Activated CD4-positive, alpha-beta T cell treated with anti-CD3 and anti-CD28 coated beads for 36 hours (primary cell): ENCODE measurements at regions of chr18 and their contacts with region 1.

Region 1: DNA sequence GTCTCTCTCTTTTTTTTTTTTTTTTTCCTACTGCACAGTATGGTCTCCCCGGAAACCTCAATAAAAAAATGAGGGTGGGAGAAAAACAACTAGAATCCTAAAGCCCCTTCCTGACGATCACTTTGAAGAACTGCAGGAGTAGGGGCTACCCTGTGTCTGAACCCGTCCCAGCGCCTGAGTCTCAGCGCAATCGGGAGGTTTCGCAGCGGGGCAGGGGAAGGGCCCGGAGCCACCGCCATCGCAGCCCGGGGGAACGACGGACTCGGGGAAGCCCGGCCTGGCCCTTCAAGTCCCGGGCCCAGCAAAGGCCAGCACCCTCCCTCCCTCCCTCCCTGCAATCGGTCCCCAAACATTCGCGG is 411 bp downstream of the NARS1 start:
- DNase-seq: peak; percentile 54
- ATAC-seq: peak; percentile 24
- H3K4me3 Mint-ChIP-seq: peak overlapping the region; percentile 88
- H3K27ac Mint-ChIP-seq: peak overlapping the region; percentile 93
- H3K4me1 Mint-ChIP-seq: peaks cover 26% of the 10 kb centered on the region
- H3K27me3 Mint-ChIP-seq: no peaks in the 10 kb centered on the region

Region 2: DNA sequence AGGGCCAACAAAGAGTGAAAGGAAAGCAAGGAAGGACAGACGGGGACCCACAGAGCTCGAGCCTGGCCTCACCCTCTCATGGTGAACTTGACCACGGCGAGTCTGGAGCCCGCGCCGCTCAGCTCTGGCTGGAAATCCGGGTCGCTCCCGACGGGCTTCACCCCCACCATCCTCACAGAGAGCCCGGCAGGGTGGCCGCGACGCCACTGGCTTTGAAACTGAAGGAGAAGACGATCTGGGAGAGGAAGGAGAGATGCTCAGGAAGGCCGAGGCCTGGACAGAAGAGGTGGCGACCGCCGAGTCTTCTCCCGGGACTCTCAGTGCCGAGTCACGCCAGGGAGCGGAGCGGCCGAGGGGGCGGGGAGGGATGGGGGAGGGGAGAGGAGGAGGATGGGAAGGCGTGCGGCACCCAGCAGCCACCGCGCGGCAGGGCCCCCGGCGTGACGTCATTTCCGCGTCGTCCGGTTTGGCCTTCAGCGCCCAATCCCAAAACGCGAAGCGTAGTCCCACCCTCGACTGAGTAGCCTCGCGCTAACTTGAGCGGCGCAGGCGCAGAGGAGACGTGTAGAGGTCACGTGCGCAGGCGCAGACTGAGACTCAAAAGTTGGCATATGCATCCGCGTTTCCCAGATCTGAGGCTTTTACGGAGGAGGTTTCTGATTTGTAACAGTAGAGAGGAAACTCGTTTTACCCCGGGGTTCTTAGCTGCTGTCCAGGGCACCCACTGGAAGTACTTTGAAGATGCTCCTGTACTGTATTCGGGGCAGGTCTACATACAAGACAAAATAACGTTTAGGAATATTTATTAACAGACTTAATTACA is 982.7 kb before region 1 on chr18 and contains the start of gene TXNL1:
- CTCF ChIA-PET with region 1: interaction called, 3 read pairs
- POLR2A ChIA-PET with region 1: no interaction called
- intact Hi-C with region 1: loop called in 1 of 2 experiments (anchors 1 kb)
- DNase-seq: peak; percentile 100
- ATAC-seq: peak; percentile 98
- H3K4me3 Mint-ChIP-seq: peak within 1 kb of the TSS; percentile 98
- H3K27ac Mint-ChIP-seq: peak within 1 kb of the TSS; percentile 96
- H3K4me1 Mint-ChIP-seq: peaks cover 41% of the 10 kb centered on the region
- H3K27me3 Mint-ChIP-seq: no peaks in the 10 kb centered on the region
- total RNA-seq, gene TXNL1: 75.3 to 87.0 TPM

Region 3: DNA sequence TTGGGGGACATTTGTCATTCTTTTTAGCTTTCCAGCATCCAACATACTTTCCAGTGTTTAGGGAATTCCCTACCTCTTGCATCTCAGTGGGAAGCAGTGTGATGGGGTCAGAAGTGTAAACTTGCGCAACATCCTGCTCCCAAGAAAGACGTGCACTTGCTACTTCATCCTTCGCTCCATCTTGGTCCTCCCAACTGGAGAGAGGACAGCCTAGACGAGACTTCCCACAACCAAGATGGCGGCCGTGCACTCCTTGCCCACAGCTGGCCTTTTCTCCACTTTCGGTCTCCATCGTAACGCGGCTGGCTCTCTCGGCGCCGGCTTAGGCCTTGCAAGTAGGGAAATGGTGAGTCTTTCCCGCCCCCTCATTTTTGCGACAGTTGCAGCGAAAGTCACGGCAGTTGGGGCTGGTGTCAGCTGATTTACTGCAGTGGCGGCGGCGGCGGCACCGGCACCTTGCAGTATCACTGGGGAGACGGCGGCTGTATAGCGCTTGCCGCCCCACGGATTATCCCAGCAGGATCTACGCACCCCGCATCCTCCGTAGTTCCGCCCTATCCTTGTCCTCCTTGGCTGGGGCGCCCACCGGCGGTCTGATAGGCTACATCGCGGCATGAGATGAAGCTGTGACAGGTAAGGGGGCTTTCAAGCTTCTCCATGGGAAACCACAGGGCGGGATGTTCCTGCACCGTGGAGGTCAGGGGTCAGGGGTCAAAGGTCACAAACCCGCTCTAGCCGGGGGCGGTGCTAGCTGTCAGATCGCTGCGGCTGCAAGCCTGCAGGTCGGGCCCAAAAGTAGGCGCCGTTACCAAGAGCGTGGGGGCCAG is 970.1 kb before region 1 on chr18 and contains the start of gene WDR7:
- CTCF ChIA-PET with region 1: interaction called, 3 read pairs
- POLR2A ChIA-PET with region 1: interaction called, 3 read pairs
- intact Hi-C with region 1: loop called (anchors 1 kb)
- DNase-seq: peak; percentile 98
- ATAC-seq: peak; percentile 93
- H3K4me3 Mint-ChIP-seq: peak within 1 kb of the TSS; percentile 89
- H3K27ac Mint-ChIP-seq: peak within 1 kb of the TSS; percentile 90
- H3K4me1 Mint-ChIP-seq: peaks cover 42% of the 10 kb centered on the region
- H3K27me3 Mint-ChIP-seq: no peaks in the 10 kb centered on the region
- total RNA-seq, gene WDR7: 21.5 to 23.1 TPM

Region 4: DNA sequence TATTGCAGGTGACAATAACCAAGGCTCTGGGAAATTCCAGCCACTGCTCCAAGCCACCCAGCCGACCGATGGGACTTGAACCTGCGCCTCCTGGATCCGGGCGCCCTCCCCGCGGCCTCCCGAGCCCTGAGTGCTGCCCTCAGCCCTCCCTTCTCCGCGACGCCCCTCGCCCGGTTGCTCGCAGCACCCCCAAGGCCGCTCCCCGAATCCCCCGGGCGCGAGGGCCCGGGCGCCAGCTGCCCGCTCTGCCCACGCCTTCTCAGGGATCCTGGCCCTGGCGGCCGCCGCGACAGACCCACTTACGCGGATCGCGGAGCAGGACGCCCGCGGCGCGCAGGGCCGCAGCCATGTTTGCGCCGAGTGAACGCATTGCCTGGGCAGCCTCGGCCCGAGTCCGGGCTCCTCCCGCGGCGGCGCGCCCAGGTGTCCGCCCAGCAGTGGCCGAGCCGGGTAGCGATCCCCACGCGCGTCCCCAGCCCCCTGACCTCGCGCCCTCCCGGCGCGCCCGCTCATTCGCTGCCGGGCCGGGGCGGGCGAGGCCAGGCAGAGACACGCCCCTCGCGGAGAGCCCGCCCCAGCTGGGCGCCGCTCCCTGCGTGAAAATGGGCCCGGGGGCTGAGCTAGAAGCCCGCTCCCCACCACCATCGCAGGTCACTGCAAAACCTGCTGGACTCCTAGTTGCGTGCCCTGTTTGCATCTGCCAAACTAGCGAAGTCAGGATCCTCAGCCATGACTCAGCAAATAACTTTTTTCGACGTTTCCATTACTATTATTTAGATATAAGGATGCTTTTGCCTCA is 34.8 kb before region 1 on chr18 and contains the start of gene FECH:
- CTCF ChIA-PET with region 1: no interaction called
- POLR2A ChIA-PET with region 1: interaction called, 4 read pairs
- intact Hi-C with region 1: loop called (anchors 1 to 5 kb)
- DNase-seq: peak; percentile 76
- ATAC-seq: peak; percentile 92
- H3K4me3 Mint-ChIP-seq: peak within 1 kb of the TSS; percentile 80
- H3K27ac Mint-ChIP-seq: peak within 1 kb of the TSS; percentile 74
- H3K4me1 Mint-ChIP-seq: peaks cover 21% of the 10 kb centered on the region
- H3K27me3 Mint-ChIP-seq: no peaks in the 10 kb centered on the region
- total RNA-seq, gene FECH: 23.3 to 28.8 TPM

Region 5: GRCh38 chr18:58128381-58129374 is 507.5 kb after region 1 on chr18:
- CTCF ChIA-PET with region 1: no interaction called
- POLR2A ChIA-PET with region 1: no interaction called
- intact Hi-C with region 1: loop called in 1 of 2 experiments (anchors 10 kb)
- DNase-seq: no peak
- ATAC-seq: no peak
- H3K4me3 Mint-ChIP-seq: no peak overlapping the region
- H3K27ac Mint-ChIP-seq: no peak overlapping the region
- H3K4me1 Mint-ChIP-seq: no peaks in the 10 kb centered on the region
- H3K27me3 Mint-ChIP-seq: no peaks in the 10 kb centered on the region

Region 6: DNA sequence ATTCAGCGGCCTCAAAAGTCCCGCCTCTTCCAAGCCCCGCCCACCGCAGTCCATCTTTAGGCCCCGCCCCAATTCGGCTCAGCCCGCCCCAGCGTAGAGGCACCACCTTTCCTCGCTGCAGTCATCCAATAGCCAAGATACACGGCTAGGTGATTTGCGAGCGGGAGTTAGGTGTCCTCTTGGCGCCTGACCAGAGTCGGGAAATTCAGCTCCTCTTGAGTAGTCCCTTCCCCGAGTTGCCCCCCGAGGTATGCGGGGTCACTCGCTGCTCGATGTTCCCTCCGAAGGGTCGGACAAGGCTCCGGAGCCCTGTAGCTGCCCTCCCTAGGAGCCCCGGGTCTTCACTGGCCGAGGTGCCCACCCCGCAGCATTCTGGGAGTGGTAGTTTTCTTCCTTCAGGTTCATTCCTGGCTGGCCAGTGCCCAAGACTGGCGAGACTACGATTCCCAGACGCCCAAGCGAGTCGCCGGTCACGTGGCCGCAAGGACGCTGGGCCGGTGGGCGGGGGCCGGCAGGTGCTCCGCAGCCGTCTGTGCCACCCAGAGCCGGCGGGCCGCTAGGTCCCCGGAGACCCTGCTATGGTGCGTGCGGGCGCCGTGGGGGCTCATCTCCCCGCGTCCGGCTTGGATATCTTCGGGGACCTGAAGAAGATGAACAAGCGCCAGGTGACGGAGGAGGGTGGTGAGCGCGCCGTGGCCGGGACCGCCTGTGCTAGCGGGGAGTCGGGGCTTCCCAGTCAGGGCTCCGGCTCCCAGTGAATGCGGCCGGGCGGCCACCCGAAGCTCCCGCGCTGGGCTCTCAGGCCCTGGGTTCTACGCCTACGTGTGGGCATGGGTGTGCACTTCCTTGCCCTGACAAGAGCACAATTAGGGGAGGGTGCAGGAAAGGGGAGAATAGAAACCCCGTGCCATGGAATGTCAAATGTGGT is 1518.4 kb after region 1 on chr18 and contains the start of gene SEC11C:
- CTCF ChIA-PET with region 1: no interaction called
- POLR2A ChIA-PET with region 1: no interaction called
- intact Hi-C with region 1: loop called in 1 of 2 experiments (anchors 10 kb)
- DNase-seq: peak; percentile 97
- ATAC-seq: peak; percentile 94
- H3K4me3 Mint-ChIP-seq: peak within 1 kb of the TSS; percentile 94
- H3K27ac Mint-ChIP-seq: peak within 1 kb of the TSS; percentile 95
- H3K4me1 Mint-ChIP-seq: peaks cover 42% of the 10 kb centered on the region
- H3K27me3 Mint-ChIP-seq: peaks cover 8% of the 10 kb centered on the region
- total RNA-seq, gene SEC11C: 53.5 to 70.2 TPM